GM12878 (cell line): ENCODE measurements at regions of chr7 and their contacts with region 1.

Region 1: DNA sequence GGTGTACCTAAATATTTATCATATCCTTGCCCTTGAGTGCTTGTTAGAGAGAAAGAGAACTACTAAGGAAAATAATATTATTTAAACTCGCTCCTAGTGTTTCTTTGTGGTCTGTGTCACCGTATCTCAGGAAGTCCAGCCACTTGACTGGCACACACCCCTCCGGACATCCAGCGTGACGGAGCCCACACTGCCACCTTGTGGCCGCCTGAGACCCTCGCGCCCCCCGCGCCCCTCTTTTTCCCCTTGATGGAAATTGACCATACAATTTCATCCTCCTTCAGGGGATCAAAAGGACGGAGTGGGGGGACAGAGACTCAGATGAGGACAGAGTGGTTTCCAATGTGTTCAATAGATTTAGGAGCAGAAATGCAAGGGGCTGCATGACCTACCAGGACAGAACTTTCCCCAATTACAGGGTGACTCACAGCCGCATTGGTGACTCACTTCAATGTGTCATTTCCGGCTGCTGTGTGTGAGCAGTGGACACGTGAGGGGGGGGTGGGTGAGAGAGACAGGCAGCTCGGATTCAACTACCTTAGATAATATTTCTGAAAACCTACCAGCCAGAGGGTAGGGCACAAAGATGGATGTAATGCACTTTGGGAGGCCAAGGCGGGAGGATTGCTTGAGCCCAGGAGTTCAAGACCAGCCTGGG is 11.4 kb downstream of the SERPINE1 start:
- DNase-seq: peak; percentile 79
- ATAC-seq: peak; percentile 97
- H3K4me3 ChIP-seq: 0 out of 2 replicates have a peak overlapping the region, but pooled peaks have one; percentile 39
- H3K27ac ChIP-seq: no peak overlapping the region
- H3K4me1 ChIP-seq: peaks cover 3% of the 10 kb centered on the region
- H3K27me3 ChIP-seq: peaks cover 0 to 2% of the 10 kb centered on the region in 2 experiments; a peak in 1 of 4 replicates
- CTCF ChIP-seq: peak; percentile 55 to 83 (median 57)
- EP300 ChIP-seq: peak in 1 of 2 experiments; percentile 76; a peak in 1 of 4 replicates
- POLR2A ChIP-seq: no peak
- RAD21 ChIP-seq: peak; percentile 44

Region 2: GRCh38 chr7:100896732-100897608 is 241.4 kb before region 1 on chr7:
- CTCF ChIA-PET with region 1: interaction called, 10 read pairs
- POLR2A ChIA-PET with region 1: no interaction called
- RAD21 ChIA-PET with region 1: no interaction called
- SMC1A ChIA-PET with region 1: interaction called, 3 read pairs
- in situ Hi-C with region 1: no loop called
- intact Hi-C with region 1: no loop called
- DNase-seq: no peak
- ATAC-seq: peak; percentile 62
- H3K4me3 ChIP-seq: no peak overlapping the region
- H3K27ac ChIP-seq: no peak overlapping the region
- H3K4me1 ChIP-seq: peaks cover 7% of the 10 kb centered on the region
- H3K27me3 ChIP-seq: peaks cover 6 to 7% of the 10 kb centered on the region in 2 experiments
- CTCF ChIP-seq: peak; percentile 65 to 78 (median 76); a peak in 5 of 6 replicates
- EP300 ChIP-seq: no peak
- POLR2A ChIP-seq: no peak
- RAD21 ChIP-seq: peak; percentile 51

Region 3: GRCh38 chr7:101009629-101010028 is 128.7 kb before region 1 on chr7:
- CTCF ChIA-PET with region 1: no interaction called
- POLR2A ChIA-PET with region 1: no interaction called
- RAD21 ChIA-PET with region 1: no interaction called
- SMC1A ChIA-PET with region 1: no interaction called
- in situ Hi-C with region 1: no loop called
- intact Hi-C with region 1: no loop called
- DNase-seq: no peak
- ATAC-seq: no peak
- H3K4me3 ChIP-seq: no peak overlapping the region
- H3K27ac ChIP-seq: no peak overlapping the region
- H3K4me1 ChIP-seq: no peaks in the 10 kb centered on the region
- H3K27me3 ChIP-seq: no peaks in the 10 kb centered on the region
- CTCF ChIP-seq: no peak
- EP300 ChIP-seq: no peak
- POLR2A ChIP-seq: no peak
- RAD21 ChIP-seq: no peak

Region 4: GRCh38 chr7:101108330-101108857 is 29.9 kb before region 1 on chr7:
- CTCF ChIA-PET with region 1: interaction called, 11 read pairs
- POLR2A ChIA-PET with region 1: interaction called, 5 read pairs
- RAD21 ChIA-PET with region 1: interaction called, 8 read pairs
- SMC1A ChIA-PET with region 1: interaction called, 5 read pairs
- in situ Hi-C with region 1: no loop called
- intact Hi-C with region 1: no loop called
- DNase-seq: peak; percentile 51
- ATAC-seq: peak; percentile 92
- H3K4me3 ChIP-seq: no peak overlapping the region
- H3K27ac ChIP-seq: no peak overlapping the region
- H3K4me1 ChIP-seq: peaks cover 12% of the 10 kb centered on the region
- H3K27me3 ChIP-seq: no peaks in the 10 kb centered on the region
- CTCF ChIP-seq: no peak
- EP300 ChIP-seq: no peak
- POLR2A ChIP-seq: no peak
- RAD21 ChIP-seq: no peak

Region 5: GRCh38 chr7:101165075-101165957 is 27.0 kb after region 1 on chr7 and contains the start of gene VGF:
- CTCF ChIA-PET with region 1: interaction called, 80 read pairs
- POLR2A ChIA-PET with region 1: interaction called, 5 read pairs
- RAD21 ChIA-PET with region 1: interaction called, 32 read pairs
- SMC1A ChIA-PET with region 1: interaction called, 10 read pairs
- in situ Hi-C with region 1: no loop called
- intact Hi-C with region 1: no loop called
- DNase-seq: no peak
- ATAC-seq: peak; percentile 82
- H3K4me3 ChIP-seq: peak within 1 kb of the TSS; percentile 44; the same call in 1 of the 2 replicates
- H3K27ac ChIP-seq: no peak within 1 kb of the TSS
- H3K4me1 ChIP-seq: peaks cover 11% of the 10 kb centered on the region
- H3K27me3 ChIP-seq: peaks cover 17 to 27% of the 10 kb centered on the region in 2 experiments; a peak in 3 of 4 replicates
- CTCF ChIP-seq: no peak
- EP300 ChIP-seq: no peak
- POLR2A ChIP-seq: 0 out of 2 replicates have a peak, but pooled peaks have one; percentile 18
- RAD21 ChIP-seq: no peak
- polyA plus RNA-seq, gene VGF: not detected

Region 6: GRCh38 chr7:101195884-101196283 is 57.5 kb after region 1 on chr7:
- CTCF ChIA-PET with region 1: interaction called, 248 read pairs
- POLR2A ChIA-PET with region 1: no interaction called
- RAD21 ChIA-PET with region 1: interaction called, 134 read pairs
- SMC1A ChIA-PET with region 1: interaction called, 71 read pairs
- in situ Hi-C with region 1: no loop called
- intact Hi-C with region 1: no loop called
- DNase-seq: no peak
- ATAC-seq: no peak
- H3K4me3 ChIP-seq: no peak overlapping the region
- H3K27ac ChIP-seq: no peak overlapping the region
- H3K4me1 ChIP-seq: no peaks in the 10 kb centered on the region
- H3K27me3 ChIP-seq: peaks cover 0 to 5% of the 10 kb centered on the region in 2 experiments; a peak in 2 of 4 replicates
- CTCF ChIP-seq: no peak
- EP300 ChIP-seq: no peak
- POLR2A ChIP-seq: no peak
- RAD21 ChIP-seq: no peak

Region 7: DNA sequence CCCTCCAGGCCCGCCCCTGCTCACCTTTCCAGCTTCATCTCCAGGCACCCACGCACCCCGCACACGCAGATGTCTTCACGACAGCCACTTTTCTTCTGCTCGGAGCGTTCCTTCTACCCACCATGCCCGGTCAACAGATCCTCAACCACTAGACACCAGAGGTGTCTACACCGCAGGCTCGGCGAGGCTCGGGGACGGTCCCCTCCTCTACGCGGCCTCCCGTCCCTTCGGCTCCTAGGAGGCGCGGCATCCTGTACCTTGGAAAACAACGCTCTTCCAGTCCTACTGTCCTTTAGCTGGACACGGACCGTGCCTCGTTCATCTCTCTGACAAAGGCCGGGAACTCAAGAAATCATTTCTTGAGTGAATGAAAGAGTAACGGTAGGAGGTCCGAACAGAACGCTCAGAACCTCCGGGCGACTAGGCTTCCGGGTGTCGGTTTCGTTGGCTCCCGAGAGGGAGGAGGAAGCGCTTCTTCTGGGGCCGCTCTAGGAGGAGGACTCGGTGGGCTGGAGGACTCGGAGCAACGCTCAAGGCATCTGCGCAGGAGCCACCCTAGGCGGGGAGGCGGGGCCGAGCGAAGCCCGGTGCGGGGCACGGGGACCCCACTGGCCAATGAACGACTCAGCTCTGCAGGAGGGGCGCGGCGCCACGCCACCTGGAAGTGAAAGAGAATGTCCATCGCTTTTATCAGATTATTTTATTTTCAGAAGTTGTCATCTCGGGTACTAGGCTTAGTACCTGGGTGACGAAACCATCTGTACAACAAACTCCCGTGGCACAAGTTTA is 113.7 kb after region 1 on chr7:
- CTCF ChIA-PET with region 1: interaction called, 11 read pairs
- POLR2A ChIA-PET with region 1: no interaction called
- RAD21 ChIA-PET with region 1: interaction called, 6 read pairs
- SMC1A ChIA-PET with region 1: no interaction called
- in situ Hi-C with region 1: no loop called
- intact Hi-C with region 1: no loop called
- DNase-seq: peak; percentile 93
- ATAC-seq: peak; percentile 100
- H3K4me3 ChIP-seq: peak overlapping the region; percentile 78
- H3K27ac ChIP-seq: peak overlapping the region; percentile 89
- H3K4me1 ChIP-seq: peaks cover 7% of the 10 kb centered on the region
- H3K27me3 ChIP-seq: no peaks in the 10 kb centered on the region; a peak in 1 of 4 replicates
- CTCF ChIP-seq: no peak
- EP300 ChIP-seq: no peak
- POLR2A ChIP-seq: peak; percentile 86
- RAD21 ChIP-seq: no peak